Activated CD8-positive, alpha-beta memory T cell treated with anti-CD3 and anti-CD28 coated beads, Interleukin-2, amount 10 ng/mL, durations not matched to agents 7 days and 5 days (primary cell): ENCODE measurements at regions of chr17 and their contacts with region 1.

Region 1: DNA sequence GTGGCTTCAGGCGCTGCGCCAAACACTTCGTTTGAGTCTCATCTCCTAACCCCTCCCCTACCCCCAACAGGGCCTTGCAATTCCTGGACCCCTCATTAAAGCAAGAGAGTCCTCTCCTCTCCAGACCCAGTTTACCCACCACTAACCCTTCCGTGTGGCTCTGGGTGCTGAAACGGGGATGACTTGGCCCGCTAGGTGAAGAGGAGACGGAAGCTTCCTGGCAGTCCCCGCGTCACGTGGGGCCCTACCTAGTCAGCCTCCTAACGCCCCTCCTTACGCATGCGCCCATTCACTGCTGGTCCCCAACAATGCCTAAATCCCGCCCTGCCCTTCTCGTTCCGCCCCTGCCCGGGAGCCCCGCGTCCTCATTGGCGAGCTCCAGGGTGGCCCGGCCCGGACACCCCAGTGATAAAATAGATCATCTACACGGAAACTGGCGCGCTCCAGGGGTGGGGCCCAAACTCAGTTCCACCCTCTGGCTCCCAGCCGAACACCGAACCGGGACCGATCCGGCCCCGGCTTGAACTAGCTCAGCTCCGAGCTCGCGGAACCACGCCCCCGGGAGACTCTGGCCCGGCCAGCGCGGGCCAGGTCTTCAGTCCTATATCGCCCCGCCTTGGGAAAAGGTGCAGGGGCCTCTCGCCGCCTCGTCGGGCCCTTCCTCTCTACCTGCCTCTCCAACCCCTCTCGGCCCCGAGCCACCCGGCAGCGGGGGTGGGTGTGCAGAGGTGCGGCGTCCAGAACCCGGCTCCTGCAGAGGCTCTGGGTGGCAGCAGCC is at the start of gene SLC16A13:
- DNase-seq: peak; percentile 100
- ATAC-seq: peak; percentile 95
- H3K4me3 Mint-ChIP-seq: peak within 1 kb of the TSS; percentile 88
- H3K27ac Mint-ChIP-seq: peak within 1 kb of the TSS; percentile 95
- H3K4me1 Mint-ChIP-seq: peaks cover 67% of the 10 kb centered on the region
- H3K27me3 Mint-ChIP-seq: no peaks in the 10 kb centered on the region
- total RNA-seq, gene SLC16A13: 19.0 to 34.1 TPM

Region 2: GRCh38 chr17:7014261-7014994 is 21.4 kb before region 1 on chr17:
- CTCF ChIA-PET with region 1: interaction called, 18 read pairs
- DNase-seq: peak; percentile 99
- ATAC-seq: peak; percentile 87
- H3K4me3 Mint-ChIP-seq: peak overlapping the region; percentile 83
- H3K27ac Mint-ChIP-seq: peak overlapping the region; percentile 98
- H3K4me1 Mint-ChIP-seq: peaks cover 67% of the 10 kb centered on the region
- H3K27me3 Mint-ChIP-seq: no peaks in the 10 kb centered on the region